CD4-positive, alpha-beta T cell (primary cell): ENCODE measurements at regions of chr12 and their contacts with region 1.

Region 1: DNA sequence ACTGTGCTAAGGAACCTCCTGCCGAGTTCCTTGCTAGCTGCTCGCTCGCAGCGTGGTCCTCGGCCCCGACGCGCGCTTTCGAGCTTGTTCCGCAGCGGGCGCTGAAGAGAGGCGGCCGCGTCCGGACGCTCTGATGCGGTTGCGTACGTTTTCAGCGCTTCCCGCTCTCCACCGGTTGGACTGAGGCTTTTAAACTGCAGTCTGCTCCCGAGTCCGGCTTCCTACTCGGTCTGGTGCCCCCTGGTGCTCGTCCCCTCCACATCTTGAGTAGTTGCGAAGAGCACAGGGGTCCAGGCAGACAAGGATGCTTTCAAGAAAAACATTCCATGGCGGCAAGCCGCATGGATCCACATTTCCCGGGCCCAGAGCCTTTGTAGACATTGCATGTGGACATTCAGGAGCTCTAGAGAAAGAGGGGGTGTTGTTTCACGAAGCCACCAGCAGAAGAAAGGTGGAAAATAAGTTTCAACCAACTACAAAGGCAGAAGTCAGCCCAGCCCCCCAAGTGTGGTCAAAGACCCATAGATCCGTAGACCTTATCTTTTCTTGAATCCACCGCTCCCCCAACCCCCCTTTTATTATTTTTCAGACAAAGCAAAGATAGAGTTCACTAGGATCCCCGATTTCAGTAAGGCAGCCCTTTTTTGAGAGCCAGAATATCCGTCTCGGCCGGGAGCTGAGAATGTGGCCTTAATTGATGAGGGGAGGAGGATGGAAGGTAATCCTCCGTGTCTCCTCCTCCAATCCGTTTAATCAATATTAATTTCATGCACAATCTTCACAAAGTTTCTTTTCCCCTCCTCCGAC is 984 bp upstream of the WNK1 start:
- DNase-seq: peak; percentile 64 to 94 (median 78)
- ATAC-seq: peak; percentile 23
- H3K4me3 ChIP-seq: peak overlapping the region; percentile 81
- H3K4me3 Mint-ChIP-seq: no peak overlapping the region
- H3K27ac ChIP-seq: peak overlapping the region; percentile 61 to 87
- H3K27ac Mint-ChIP-seq: no peak overlapping the region
- H3K4me1 ChIP-seq: peaks cover 20% of the 10 kb centered on the region
- H3K4me1 Mint-ChIP-seq: peaks cover 11% of the 10 kb centered on the region
- H3K27me3 ChIP-seq: no peaks in the 10 kb centered on the region
- H3K27me3 Mint-ChIP-seq: no peaks in the 10 kb centered on the region
- CTCF ChIP-seq: peak; percentile 74

Region 2: DNA sequence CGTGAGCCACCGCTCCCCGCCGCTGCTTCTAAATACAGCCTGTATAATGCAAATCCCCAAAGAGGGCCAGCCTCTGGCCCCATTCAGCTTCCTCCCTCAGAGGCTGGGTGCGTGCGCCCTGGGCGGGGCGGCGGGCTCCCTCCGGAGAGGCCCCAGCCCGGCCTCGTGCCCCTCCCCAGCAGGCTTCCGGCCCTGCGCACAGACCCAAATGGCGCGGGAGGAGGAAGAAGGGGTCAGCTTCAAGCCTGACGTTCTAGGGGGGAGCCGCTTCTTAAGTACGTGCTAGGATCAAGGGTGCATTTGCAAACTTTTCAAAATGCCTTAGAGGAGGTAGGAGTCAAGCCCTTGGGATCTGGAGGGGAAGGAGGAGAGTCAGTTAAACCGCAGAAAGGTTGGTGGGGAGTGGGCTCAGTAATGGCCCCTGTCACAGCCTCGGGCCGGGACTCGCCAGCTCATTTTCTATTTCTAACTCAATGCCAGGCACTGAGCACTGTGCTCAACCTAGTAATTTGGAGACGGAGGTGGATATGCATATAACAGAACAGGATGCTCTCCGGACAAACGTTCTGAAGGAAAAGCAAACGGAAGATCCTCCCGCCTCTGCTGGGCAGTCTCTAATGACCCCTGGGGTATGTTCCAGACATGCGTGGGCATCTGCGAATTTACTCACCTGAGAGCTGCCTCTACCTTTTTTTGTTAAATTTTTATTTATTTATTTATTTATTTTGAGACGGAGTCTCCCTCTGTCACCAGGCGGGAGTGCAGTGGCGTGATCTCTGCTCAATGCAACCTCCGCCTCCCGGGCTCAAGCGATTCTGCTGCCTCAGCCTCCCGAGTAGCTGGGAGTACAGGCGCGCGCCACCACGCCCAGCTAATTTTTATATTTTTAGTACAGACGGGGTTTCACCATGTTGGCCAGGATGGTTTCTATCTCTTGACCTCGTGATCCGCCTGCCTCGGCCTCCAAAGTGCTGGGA is 120.5 kb before region 1 on chr12:
- CTCF ChIA-PET with region 1: interaction called, 4 read pairs
- POLR2A ChIA-PET with region 1: interaction called, 88 read pairs
- intact Hi-C with region 1: no loop called
- DNase-seq: peak in 13 of 14 experiments; percentile 41 to 85 (median 66)
- ATAC-seq: peak; percentile 95
- H3K4me3 ChIP-seq: no peak overlapping the region
- H3K4me3 Mint-ChIP-seq: peak overlapping the region; percentile 96
- H3K27ac ChIP-seq: peak overlapping the region in 1 of 2 donors; percentile 60
- H3K27ac Mint-ChIP-seq: peak overlapping the region; percentile 98
- H3K4me1 ChIP-seq: peaks cover 37% of the 10 kb centered on the region
- H3K4me1 Mint-ChIP-seq: peaks cover 41% of the 10 kb centered on the region
- H3K27me3 ChIP-seq: no peaks in the 10 kb centered on the region
- H3K27me3 Mint-ChIP-seq: no peaks in the 10 kb centered on the region
- CTCF ChIP-seq: no peak

Region 3: DNA sequence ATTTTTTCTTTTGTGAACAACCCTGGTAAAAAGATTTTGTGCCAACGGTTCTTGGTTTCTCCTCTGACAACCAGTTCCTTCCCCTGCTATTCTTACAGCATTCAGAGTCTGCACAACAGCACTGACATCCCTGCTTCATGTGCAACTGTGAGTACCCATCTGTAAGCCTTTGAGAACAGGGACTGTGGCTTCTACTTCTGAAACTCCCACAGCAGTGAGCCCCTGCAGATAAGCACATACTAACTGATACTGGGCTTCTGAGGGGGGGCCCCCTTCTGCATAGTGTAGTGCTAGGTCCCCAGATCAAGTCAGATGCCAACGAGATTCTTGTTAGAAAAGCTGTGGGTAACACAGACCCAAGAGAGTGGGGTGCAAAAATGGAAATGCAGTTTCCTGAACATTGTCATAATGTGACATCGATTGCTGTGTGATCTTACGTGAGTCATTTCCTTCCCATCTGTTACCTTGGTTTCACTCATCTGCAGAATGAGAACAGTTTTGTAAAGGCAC is 77.1 kb before region 1 on chr12:
- CTCF ChIA-PET with region 1: interaction called, 24 read pairs
- POLR2A ChIA-PET with region 1: interaction called, 47 read pairs
- intact Hi-C with region 1: loop called in 1 of 2 experiments (anchors 5 kb)
- DNase-seq: peak; percentile 6 to 90 (median 53)
- ATAC-seq: peak; percentile 89
- H3K4me3 ChIP-seq: peak overlapping the region; percentile 11
- H3K4me3 Mint-ChIP-seq: peak overlapping the region; percentile 80
- H3K27ac ChIP-seq: peak overlapping the region; percentile 52 to 82
- H3K27ac Mint-ChIP-seq: peak overlapping the region; percentile 94
- H3K4me1 ChIP-seq: peaks cover 64% of the 10 kb centered on the region
- H3K4me1 Mint-ChIP-seq: peaks cover 68% of the 10 kb centered on the region
- H3K27me3 ChIP-seq: no peaks in the 10 kb centered on the region
- H3K27me3 Mint-ChIP-seq: no peaks in the 10 kb centered on the region
- CTCF ChIP-seq: no peak

Region 4: DNA sequence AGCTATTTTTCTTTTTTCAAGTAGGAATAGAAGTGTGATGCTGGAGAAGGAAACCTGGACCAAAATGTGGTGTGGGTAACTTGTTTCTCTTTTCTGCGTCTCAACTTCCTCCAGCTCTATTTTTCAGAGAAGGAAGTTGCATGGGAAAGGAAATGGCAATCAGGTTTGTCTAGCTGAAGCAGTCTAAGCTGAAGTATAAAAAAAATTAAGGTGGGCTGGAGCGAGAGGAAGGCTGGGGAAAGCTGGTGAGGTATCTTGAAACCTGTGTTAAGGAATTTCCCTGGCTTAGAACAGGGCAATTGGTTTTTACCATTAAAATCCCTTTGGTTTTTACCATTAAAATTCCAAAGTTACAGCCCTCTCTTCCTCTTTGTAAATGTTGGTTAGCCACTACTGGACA is 53.9 kb before region 1 on chr12:
- CTCF ChIA-PET with region 1: interaction called, 4 read pairs
- POLR2A ChIA-PET with region 1: interaction called, 18 read pairs
- intact Hi-C with region 1: loop called in 1 of 2 experiments (anchors 5 kb)
- DNase-seq: peak in 3 of 14 experiments; percentile 32 to 54 (median 35)
- ATAC-seq: peak; percentile 58
- H3K4me3 ChIP-seq: no peak overlapping the region
- H3K4me3 Mint-ChIP-seq: peak overlapping the region; percentile 48
- H3K27ac ChIP-seq: peak overlapping the region in 1 of 2 donors; percentile 6
- H3K27ac Mint-ChIP-seq: peak overlapping the region; percentile 60
- H3K4me1 ChIP-seq: peaks cover 16% of the 10 kb centered on the region
- H3K4me1 Mint-ChIP-seq: peaks cover 46% of the 10 kb centered on the region
- H3K27me3 ChIP-seq: no peaks in the 10 kb centered on the region
- H3K27me3 Mint-ChIP-seq: no peaks in the 10 kb centered on the region
- CTCF ChIP-seq: no peak

Region 5: DNA sequence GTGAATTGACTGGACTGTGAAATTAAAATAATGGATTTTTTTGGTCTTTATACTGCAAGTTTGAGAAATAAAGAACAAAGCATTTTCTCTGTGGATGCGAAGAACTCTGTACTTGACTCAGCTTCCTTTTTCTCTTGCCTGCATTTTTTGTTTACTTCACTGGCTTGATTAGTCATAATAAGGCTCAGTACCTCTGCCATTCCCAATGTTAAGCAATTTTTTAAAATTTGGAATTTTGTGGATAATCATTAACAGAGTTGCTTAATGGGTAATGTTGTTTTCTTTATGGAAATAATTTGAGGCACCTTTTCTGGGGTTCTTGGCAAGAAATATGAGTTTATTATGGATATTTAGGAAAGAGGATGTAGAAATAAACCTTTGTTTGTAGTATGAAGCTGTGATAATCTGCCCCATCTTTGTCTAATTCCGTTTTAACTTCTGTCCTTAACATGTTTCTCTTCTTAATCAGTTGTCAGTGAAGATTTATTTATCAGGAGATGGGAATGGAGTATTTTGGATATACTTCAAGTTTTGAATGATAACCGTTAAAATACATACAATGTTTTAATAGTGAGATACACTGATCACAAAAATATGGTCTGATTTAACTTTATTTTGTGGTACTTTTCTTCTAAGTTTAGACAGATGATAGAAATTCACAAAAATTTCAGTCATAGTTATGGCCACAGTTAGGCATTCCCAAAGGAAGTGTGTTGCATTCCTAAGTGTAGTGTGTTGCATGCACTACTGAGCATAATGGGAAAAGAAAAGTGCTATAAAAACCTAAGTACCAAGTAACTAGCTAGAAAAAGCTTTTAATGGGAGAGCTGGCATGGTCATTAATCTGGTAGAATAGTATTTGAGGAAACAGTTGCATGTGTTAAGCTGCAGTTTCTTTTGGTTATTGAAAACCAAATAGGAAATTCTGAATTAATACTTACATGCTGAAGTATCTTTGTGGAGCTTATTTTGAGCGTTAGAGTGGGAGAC is 28.6 kb after region 1 on chr12:
- CTCF ChIA-PET with region 1: interaction called, 20 read pairs
- POLR2A ChIA-PET with region 1: interaction called, 31 read pairs
- intact Hi-C with region 1: loop called in 1 of 2 experiments (anchors 2 kb)
- DNase-seq: peak in 1 of 14 experiments; percentile 30
- ATAC-seq: peak; percentile 63
- H3K4me3 ChIP-seq: peak overlapping the region; percentile 21
- H3K4me3 Mint-ChIP-seq: peak overlapping the region; percentile 88
- H3K27ac ChIP-seq: no peak overlapping the region
- H3K27ac Mint-ChIP-seq: peak overlapping the region; percentile 43
- H3K4me1 ChIP-seq: peaks cover 39% of the 10 kb centered on the region
- H3K4me1 Mint-ChIP-seq: peaks cover 76% of the 10 kb centered on the region
- H3K27me3 ChIP-seq: no peaks in the 10 kb centered on the region
- H3K27me3 Mint-ChIP-seq: no peaks in the 10 kb centered on the region
- CTCF ChIP-seq: no peak

Region 6: DNA sequence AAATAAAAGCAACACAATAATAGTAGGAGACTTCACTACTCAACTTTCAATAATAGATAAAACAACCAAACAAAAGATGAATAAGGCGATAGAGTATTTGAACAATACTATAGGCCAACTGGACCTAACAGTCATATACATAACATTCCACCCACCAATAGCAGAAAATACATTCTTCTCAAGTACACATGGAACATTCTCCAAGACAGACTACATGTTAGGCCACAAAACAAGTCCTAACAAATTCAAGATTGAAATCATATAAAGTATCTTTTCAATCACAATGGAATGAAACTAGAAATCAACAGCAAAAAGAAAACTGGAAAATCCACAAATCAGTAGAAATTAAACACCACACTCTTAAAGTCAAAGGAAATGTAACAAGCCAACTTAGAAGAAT is 169.3 kb after region 1 on chr12:
- CTCF ChIA-PET with region 1: no interaction called
- POLR2A ChIA-PET with region 1: no interaction called
- intact Hi-C with region 1: no loop called
- DNase-seq: no peak
- ATAC-seq: no peak
- H3K4me3 ChIP-seq: no peak overlapping the region
- H3K4me3 Mint-ChIP-seq: no peak overlapping the region
- H3K27ac ChIP-seq: no peak overlapping the region
- H3K27ac Mint-ChIP-seq: peak overlapping the region; percentile 81
- H3K4me1 ChIP-seq: peaks cover 2% of the 10 kb centered on the region
- H3K4me1 Mint-ChIP-seq: peaks cover 24% of the 10 kb centered on the region
- H3K27me3 ChIP-seq: no peaks in the 10 kb centered on the region
- H3K27me3 Mint-ChIP-seq: no peaks in the 10 kb centered on the region
- CTCF ChIP-seq: no peak

Region 7: DNA sequence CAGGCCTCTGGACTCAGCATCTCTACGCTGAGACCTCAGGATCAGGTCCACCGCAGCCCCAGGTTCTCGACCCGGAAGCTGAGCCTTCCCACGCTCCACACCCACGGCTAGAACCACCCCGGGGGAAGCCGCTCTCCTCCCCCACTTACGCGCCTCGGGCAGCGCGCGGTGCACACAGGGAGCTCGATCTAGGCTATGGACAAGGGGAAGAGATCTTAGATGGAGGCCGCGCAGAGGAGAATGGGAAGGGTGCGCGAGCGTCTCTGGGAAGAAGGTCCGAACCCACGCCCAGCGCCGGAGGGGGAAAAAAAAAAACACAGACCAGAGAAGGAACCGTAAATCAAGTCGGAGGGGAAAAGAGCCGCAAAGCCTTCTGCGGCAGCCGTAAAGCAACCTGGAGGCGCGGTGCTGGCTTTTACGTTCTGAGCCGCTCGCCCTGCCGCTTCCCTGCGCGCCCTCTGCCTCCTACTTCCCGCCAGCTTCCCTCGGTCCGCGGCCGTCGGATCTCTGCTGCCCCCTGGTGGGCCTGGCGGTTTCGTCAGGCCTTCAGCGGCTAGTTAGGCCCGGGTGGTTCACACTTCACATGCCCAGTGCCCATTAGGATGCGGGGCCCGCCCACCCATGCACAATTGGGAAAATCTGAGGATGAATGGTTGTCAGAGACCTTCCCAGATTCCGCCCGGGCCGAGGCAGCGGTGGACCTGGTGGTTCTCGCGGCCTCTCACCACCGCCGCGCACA is 198.2 kb after region 1 on chr12 and contains the start of gene RAD52:
- CTCF ChIA-PET with region 1: interaction called, 6 read pairs
- POLR2A ChIA-PET with region 1: interaction called, 11 read pairs
- intact Hi-C with region 1: loop called in 1 of 2 experiments (anchors 2 kb)
- DNase-seq: peak; percentile 95 to 99 (median 97)
- ATAC-seq: peak; percentile 87
- H3K4me3 ChIP-seq: peak within 1 kb of the TSS; percentile 75
- H3K4me3 Mint-ChIP-seq: peak within 1 kb of the TSS; percentile 98
- H3K27ac ChIP-seq: peak within 1 kb of the TSS; percentile 80 to 86
- H3K27ac Mint-ChIP-seq: peak within 1 kb of the TSS; percentile 90
- H3K4me1 ChIP-seq: peaks cover 24% of the 10 kb centered on the region
- H3K4me1 Mint-ChIP-seq: peaks cover 34% of the 10 kb centered on the region
- H3K27me3 ChIP-seq: no peaks in the 10 kb centered on the region
- H3K27me3 Mint-ChIP-seq: no peaks in the 10 kb centered on the region
- CTCF ChIP-seq: peak; percentile 96
- total RNA-seq, gene RAD52: 7.0 to 8.1 TPM